Spleen (tissue), 13 donors: ENCODE measurements at regions of chr15 and their contacts with region 1.

Region 1: GRCh38 chr15:60326824-60327654 is 70.7 kb downstream of the ANXA2 start:
- DNase-seq: no peak
- H3K4me3 ChIP-seq: no peak overlapping the region
- H3K27ac ChIP-seq: no peak overlapping the region
- H3K4me1 ChIP-seq: peaks cover 0 to 9% (median 2%) of the 10 kb centered on the region in 6 donors
- H3K27me3 ChIP-seq: peaks cover 0 to 53% (median 18%) of the 10 kb centered on the region in 7 donors
- CTCF ChIP-seq: peak in 9 of 11 experiments; percentile 20 to 67 (median 55)
- POLR2A ChIP-seq: no peak

Region 2: GRCh38 chr15:59725172-59725486 is 601.9 kb before region 1 on chr15:
- intact Hi-C with region 1: loop called (anchors 10 kb)
- DNase-seq: no peak
- H3K4me3 ChIP-seq: no peak overlapping the region
- H3K27ac ChIP-seq: no peak overlapping the region
- H3K4me1 ChIP-seq: no peaks in the 10 kb centered on the region
- H3K27me3 ChIP-seq: peaks cover 0 to 26% (median 0%) of the 10 kb centered on the region in 7 donors
- CTCF ChIP-seq: peak in 1 of 11 experiments; percentile 1
- POLR2A ChIP-seq: no peak

Region 3: DNA sequence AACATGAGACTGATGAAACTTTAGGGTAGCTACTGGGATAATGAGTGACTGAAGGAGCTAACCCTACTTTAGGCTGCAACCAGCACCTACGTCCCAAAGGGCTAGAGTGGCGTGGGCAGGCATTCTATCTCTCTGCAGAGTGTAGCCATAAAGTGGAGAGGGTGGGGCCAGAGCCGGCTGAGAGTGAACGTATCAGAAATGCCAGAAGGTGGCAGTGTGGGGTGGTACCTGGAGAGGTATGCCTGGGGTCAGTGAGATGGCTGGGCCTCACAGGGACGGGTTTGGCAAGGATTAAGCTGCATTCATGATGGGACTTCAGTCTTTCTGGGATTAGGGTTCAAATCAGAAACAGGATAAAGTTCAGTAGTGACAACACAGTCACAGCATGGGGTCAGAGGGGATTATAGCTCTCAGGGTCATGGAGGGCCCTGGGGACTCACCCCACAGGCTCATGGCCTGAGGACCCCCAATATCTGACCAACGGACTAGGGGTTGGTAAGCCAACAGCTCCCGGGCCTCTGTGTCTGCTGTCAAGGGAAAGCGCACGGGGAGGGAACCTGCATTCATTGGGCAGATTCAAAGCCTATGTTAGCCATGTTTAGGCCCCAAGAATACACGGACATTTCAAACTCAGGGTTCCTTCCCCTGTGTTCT is 409.4 kb before region 1 on chr15:
- intact Hi-C with region 1: loop called (anchors 5 kb)
- DNase-seq: peak; percentile 78
- H3K4me3 ChIP-seq: no peak overlapping the region
- H3K27ac ChIP-seq: no peak overlapping the region
- H3K4me1 ChIP-seq: no peaks in the 10 kb centered on the region
- H3K27me3 ChIP-seq: peaks cover 0 to 43% (median 7%) of the 10 kb centered on the region in 7 donors
- CTCF ChIP-seq: peak in 8 of 11 experiments; percentile 21 to 72 (median 48)
- POLR2A ChIP-seq: no peak